CD8-positive, alpha-beta T cell (primary cell): ENCODE measurements at regions of chr1 and their contacts with region 1.

Region 1: GRCh38 chr1:159891275-159892157 is 8.4 kb downstream of the CFAP45 start:
- DNase-seq: peak; percentile 63 to 91 (median 78)
- ATAC-seq: peak; percentile 93
- H3K4me3 ChIP-seq: no peak overlapping the region
- H3K4me3 Mint-ChIP-seq: no peak overlapping the region
- H3K27ac ChIP-seq: no peak overlapping the region
- H3K27ac Mint-ChIP-seq: no peak overlapping the region
- H3K4me1 ChIP-seq: peaks cover 6% of the 10 kb centered on the region
- H3K4me1 Mint-ChIP-seq: peaks cover 17% of the 10 kb centered on the region
- H3K27me3 ChIP-seq: no peaks in the 10 kb centered on the region
- H3K27me3 Mint-ChIP-seq: no peaks in the 10 kb centered on the region
- CTCF ChIP-seq: peak; percentile 96

Region 2: DNA sequence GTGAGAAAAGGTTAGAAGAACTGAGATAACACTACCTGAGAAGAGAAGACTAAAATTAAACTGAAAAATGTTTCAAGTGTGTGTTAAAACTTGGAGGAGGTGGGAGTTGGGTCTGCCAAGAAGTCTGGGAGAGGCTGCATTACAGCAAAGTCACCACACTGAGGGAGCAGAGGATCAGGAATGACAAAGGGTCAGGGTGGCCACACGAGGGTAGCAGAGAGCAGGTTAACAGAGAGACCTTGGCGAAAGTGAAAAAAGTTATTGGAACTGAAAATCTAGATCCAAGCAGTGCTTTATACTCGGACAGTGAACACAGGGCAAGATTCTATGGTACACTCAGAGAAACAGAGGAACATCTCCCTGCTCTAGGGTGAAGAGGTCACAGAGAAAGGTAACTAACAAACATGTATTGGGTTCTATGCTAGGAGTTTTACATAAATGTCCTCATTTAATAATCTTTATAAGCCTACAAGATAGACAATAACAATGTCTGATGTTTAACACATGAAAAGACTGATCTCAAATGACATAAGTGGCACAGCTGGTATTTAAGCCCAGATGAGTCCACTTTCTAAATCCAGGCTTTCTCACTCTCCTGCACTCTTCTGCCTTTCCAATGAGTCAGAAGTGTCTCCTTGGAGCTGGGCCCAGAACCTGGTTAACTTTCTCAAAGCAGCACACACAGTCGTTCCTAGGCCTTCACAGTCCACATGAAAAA is 730.4 kb before region 1 on chr1:
- CTCF ChIA-PET with region 1: interaction called, 20 read pairs
- POLR2A ChIA-PET with region 1: no interaction called
- intact Hi-C with region 1: loop called (anchors 1 to 2 kb)
- DNase-seq: peak; percentile 28 to 75 (median 63)
- ATAC-seq: peak; percentile 75
- H3K4me3 ChIP-seq: no peak overlapping the region
- H3K4me3 Mint-ChIP-seq: no peak overlapping the region
- H3K27ac ChIP-seq: no peak overlapping the region
- H3K27ac Mint-ChIP-seq: no peak overlapping the region
- H3K4me1 ChIP-seq: no peaks in the 10 kb centered on the region
- H3K4me1 Mint-ChIP-seq: peaks cover 2% of the 10 kb centered on the region
- H3K27me3 ChIP-seq: peaks cover 0 to 4% of the 10 kb centered on the region in 2 experiments
- H3K27me3 Mint-ChIP-seq: peaks cover 47% of the 10 kb centered on the region
- CTCF ChIP-seq: peak; percentile 79

Region 3: GRCh38 chr1:159554696-159555095 is 336.8 kb before region 1 on chr1:
- CTCF ChIA-PET with region 1: no interaction called
- POLR2A ChIA-PET with region 1: no interaction called
- intact Hi-C with region 1: no loop called
- DNase-seq: no peak
- ATAC-seq: no peak
- H3K4me3 ChIP-seq: no peak overlapping the region
- H3K4me3 Mint-ChIP-seq: no peak overlapping the region
- H3K27ac ChIP-seq: no peak overlapping the region
- H3K27ac Mint-ChIP-seq: no peak overlapping the region
- H3K4me1 ChIP-seq: no peaks in the 10 kb centered on the region
- H3K4me1 Mint-ChIP-seq: no peaks in the 10 kb centered on the region
- H3K27me3 ChIP-seq: no peaks in the 10 kb centered on the region
- H3K27me3 Mint-ChIP-seq: peaks cover 15% of the 10 kb centered on the region
- CTCF ChIP-seq: no peak

Region 4: GRCh38 chr1:159707472-159708260 is 183.8 kb before region 1 on chr1:
- CTCF ChIA-PET with region 1: no interaction called
- POLR2A ChIA-PET with region 1: no interaction called
- intact Hi-C with region 1: no loop called
- DNase-seq: no peak
- ATAC-seq: no peak
- H3K4me3 ChIP-seq: no peak overlapping the region
- H3K4me3 Mint-ChIP-seq: no peak overlapping the region
- H3K27ac ChIP-seq: no peak overlapping the region
- H3K27ac Mint-ChIP-seq: no peak overlapping the region
- H3K4me1 ChIP-seq: no peaks in the 10 kb centered on the region
- H3K4me1 Mint-ChIP-seq: no peaks in the 10 kb centered on the region
- H3K27me3 ChIP-seq: no peaks in the 10 kb centered on the region
- H3K27me3 Mint-ChIP-seq: peaks cover 4% of the 10 kb centered on the region
- CTCF ChIP-seq: no peak

Region 5: DNA sequence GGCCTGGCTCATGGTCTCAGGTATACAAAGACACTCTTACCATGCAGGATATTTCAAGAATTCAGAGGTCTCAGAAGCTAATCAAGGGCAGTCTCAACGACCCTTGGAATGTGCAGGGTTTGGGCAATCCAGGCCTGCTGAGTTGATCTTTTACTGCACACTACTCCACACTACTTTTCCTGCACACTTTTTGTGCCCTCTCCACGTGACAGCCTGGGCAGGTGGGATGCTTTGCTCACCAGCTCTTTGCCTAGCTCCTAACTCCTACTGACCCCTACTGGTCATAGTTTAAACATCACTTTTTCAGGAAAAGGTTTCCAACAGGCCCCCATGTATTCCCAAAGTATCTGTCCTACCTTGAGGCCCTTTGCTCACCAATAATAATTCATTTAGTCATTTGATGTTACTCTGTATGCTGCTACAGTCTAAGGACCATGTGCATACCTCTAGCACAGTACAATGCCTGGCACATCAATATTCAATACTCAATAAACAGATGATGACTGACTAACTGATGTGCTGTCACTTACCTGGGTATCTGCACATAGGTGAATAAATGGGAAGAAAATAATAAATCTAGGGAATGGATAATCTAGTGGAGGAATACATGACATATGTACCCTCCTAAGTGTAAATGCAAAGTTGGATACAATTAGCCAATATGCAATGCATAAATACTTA is 101.1 kb before region 1 on chr1:
- CTCF ChIA-PET with region 1: interaction called, 531 read pairs
- POLR2A ChIA-PET with region 1: no interaction called
- intact Hi-C with region 1: no loop called
- DNase-seq: peak in 2 of 9 experiments; percentile 39 to 50
- ATAC-seq: peak; percentile 31
- H3K4me3 ChIP-seq: no peak overlapping the region
- H3K4me3 Mint-ChIP-seq: no peak overlapping the region
- H3K27ac ChIP-seq: no peak overlapping the region
- H3K27ac Mint-ChIP-seq: no peak overlapping the region
- H3K4me1 ChIP-seq: no peaks in the 10 kb centered on the region
- H3K4me1 Mint-ChIP-seq: no peaks in the 10 kb centered on the region
- H3K27me3 ChIP-seq: no peaks in the 10 kb centered on the region
- H3K27me3 Mint-ChIP-seq: peaks cover 4% of the 10 kb centered on the region
- CTCF ChIP-seq: peak; percentile 45

Region 6: GRCh38 chr1:159854693-159855192 is 36.8 kb before region 1 on chr1:
- CTCF ChIA-PET with region 1: interaction called, 31 read pairs
- POLR2A ChIA-PET with region 1: no interaction called
- intact Hi-C with region 1: loop called in 1 of 2 experiments (anchors 5 kb)
- DNase-seq: peak; percentile 47 to 88 (median 77)
- ATAC-seq: peak; percentile 93
- H3K4me3 ChIP-seq: peak overlapping the region; percentile 70 to 71
- H3K4me3 Mint-ChIP-seq: peak overlapping the region; percentile 92
- H3K27ac ChIP-seq: peak overlapping the region; percentile 70 to 80
- H3K27ac Mint-ChIP-seq: peak overlapping the region; percentile 93
- H3K4me1 ChIP-seq: peaks cover 18% of the 10 kb centered on the region
- H3K4me1 Mint-ChIP-seq: peaks cover 37% of the 10 kb centered on the region
- H3K27me3 ChIP-seq: no peaks in the 10 kb centered on the region
- H3K27me3 Mint-ChIP-seq: no peaks in the 10 kb centered on the region
- CTCF ChIP-seq: no peak

Region 7: DNA sequence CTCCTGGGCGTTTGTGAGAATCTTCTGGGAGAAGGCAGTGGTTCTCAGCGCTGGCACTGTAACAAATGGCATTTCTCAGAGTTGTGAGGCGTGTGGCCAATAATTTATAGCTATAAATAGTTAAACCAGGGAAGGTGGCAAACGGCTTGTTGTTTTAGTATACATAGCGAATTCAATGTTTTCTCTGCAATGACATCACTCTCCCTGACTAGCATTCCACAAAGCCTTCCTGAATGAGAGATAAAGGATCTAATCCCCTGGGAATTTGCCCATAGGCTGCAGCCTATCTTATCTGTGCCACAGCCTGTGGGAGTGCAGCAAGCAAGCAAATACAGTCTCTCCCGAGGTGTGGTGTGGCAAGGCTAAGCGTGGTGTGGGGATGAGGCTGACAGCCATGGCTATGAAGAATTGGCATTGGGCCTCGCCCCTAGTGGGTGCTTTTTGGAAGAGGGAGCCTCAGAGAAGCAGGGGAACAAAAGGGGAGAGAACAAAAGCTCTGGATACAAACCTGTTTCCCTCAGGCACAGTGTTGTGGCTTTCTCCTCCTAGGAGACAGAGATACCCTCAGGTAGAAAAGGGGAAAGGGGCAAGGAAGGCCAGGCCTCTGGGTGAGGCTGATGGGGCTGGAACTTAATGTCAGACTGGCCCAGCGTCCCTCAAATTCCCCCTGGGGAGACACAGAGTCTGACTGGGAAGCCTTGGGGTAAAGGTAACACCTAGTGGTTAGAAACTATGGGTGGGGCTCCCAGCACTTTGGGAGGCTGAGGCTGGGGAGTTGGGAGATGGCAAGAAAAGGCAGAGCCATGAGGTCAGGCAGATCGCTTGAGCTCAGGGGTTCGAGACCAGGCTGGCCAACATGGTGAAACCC is 24.9 kb after region 1 on chr1:
- CTCF ChIA-PET with region 1: interaction called, 54 read pairs
- POLR2A ChIA-PET with region 1: no interaction called
- intact Hi-C with region 1: no loop called
- DNase-seq: no peak
- ATAC-seq: no peak
- H3K4me3 ChIP-seq: no peak overlapping the region
- H3K4me3 Mint-ChIP-seq: no peak overlapping the region
- H3K27ac ChIP-seq: peak overlapping the region; percentile 15 to 34
- H3K27ac Mint-ChIP-seq: peak overlapping the region; percentile 75
- H3K4me1 ChIP-seq: peaks cover 24% of the 10 kb centered on the region
- H3K4me1 Mint-ChIP-seq: peaks cover 66% of the 10 kb centered on the region
- H3K27me3 ChIP-seq: no peaks in the 10 kb centered on the region
- H3K27me3 Mint-ChIP-seq: no peaks in the 10 kb centered on the region
- CTCF ChIP-seq: no peak

Region 8: GRCh38 chr1:159945483-159946241 is 54.1 kb after region 1 on chr1 and contains the start of gene IGSF9:
- CTCF ChIA-PET with region 1: interaction called, 46 read pairs
- POLR2A ChIA-PET with region 1: no interaction called
- intact Hi-C with region 1: loop called (anchors 1 to 5 kb)
- DNase-seq: peak; percentile 67 to 92 (median 86)
- ATAC-seq: peak; percentile 97
- H3K4me3 ChIP-seq: peak within 1 kb of the TSS; percentile 13 to 32
- H3K4me3 Mint-ChIP-seq: peak within 1 kb of the TSS; percentile 68
- H3K27ac ChIP-seq: no peak within 1 kb of the TSS
- H3K27ac Mint-ChIP-seq: no peak within 1 kb of the TSS
- H3K4me1 ChIP-seq: peaks cover 12% of the 10 kb centered on the region
- H3K4me1 Mint-ChIP-seq: peaks cover 13% of the 10 kb centered on the region
- H3K27me3 ChIP-seq: peaks cover 5 to 16% of the 10 kb centered on the region in 2 experiments
- H3K27me3 Mint-ChIP-seq: peaks cover 26% of the 10 kb centered on the region
- CTCF ChIP-seq: peak; percentile 67
- total RNA-seq, gene IGSF9: not detected

Region 9: DNA sequence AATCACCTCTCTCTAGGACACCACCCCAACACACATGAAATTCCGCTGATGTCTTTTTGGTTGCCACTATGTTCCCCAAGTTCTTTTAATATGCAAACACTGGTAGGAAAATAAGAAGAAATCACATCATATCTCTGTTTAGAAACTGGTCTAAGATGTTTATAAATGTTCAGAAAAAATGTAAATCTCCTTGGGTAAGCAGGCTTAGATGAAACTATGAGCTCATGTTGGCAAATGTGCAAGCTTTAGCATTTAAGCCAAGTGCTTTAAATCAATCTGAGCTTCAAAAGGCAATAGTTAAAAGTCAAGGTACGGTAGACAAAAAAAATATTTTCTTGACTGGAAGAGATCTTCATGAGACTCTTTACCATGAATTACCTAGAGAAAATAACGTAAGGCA is 87.7 kb after region 1 on chr1:
- CTCF ChIA-PET with region 1: no interaction called
- POLR2A ChIA-PET with region 1: no interaction called
- intact Hi-C with region 1: no loop called
- DNase-seq: no peak
- ATAC-seq: no peak
- H3K4me3 ChIP-seq: no peak overlapping the region
- H3K4me3 Mint-ChIP-seq: no peak overlapping the region
- H3K27ac ChIP-seq: no peak overlapping the region
- H3K27ac Mint-ChIP-seq: no peak overlapping the region
- H3K4me1 ChIP-seq: no peaks in the 10 kb centered on the region
- H3K4me1 Mint-ChIP-seq: no peaks in the 10 kb centered on the region
- H3K27me3 ChIP-seq: no peaks in the 10 kb centered on the region
- H3K27me3 Mint-ChIP-seq: peaks cover 30% of the 10 kb centered on the region
- CTCF ChIP-seq: no peak